Activated B cell treated with CpG ODN at 0.5 μM for 24 hours (primary cell): ENCODE measurements at regions of chr9 and their contacts with region 1.

Region 1: DNA sequence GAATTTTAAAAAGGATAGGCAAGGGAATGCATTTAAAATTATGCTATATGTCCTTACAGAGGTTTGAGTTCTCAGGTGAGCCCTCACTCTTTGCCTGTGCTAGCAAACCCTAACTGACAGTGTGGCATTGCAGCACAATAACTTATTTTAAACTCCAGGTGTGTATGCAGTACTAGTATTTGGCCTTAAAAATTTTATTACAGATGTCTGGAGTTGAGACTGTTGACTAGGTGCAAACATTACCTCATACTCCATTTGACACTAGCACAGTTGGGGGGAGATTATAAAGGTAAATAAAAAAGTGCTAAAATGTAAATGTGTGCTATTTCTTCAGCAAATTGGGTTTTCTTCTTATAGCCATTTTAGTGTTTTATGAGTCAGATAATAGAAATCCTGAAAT is 407.7 kb downstream of the SH3GL2 start:
- DNase-seq: no peak
- ATAC-seq: no peak
- H3K4me3 Mint-ChIP-seq: no peak overlapping the region
- H3K27ac Mint-ChIP-seq: no peak overlapping the region
- H3K4me1 Mint-ChIP-seq: no peaks in the 10 kb centered on the region
- H3K27me3 Mint-ChIP-seq: no peaks in the 10 kb centered on the region
- CTCF ChIP-seq: no peak

Region 2: GRCh38 chr9:17776735-17777134 is 209.9 kb before region 1 on chr9:
- CTCF ChIA-PET with region 1: no interaction called
- POLR2A ChIA-PET with region 1: no interaction called
- intact Hi-C with region 1: no loop called
- DNase-seq: no peak
- ATAC-seq: no peak
- H3K4me3 Mint-ChIP-seq: no peak overlapping the region
- H3K27ac Mint-ChIP-seq: no peak overlapping the region
- H3K4me1 Mint-ChIP-seq: no peaks in the 10 kb centered on the region
- H3K27me3 Mint-ChIP-seq: no peaks in the 10 kb centered on the region
- CTCF ChIP-seq: no peak

Region 3: DNA sequence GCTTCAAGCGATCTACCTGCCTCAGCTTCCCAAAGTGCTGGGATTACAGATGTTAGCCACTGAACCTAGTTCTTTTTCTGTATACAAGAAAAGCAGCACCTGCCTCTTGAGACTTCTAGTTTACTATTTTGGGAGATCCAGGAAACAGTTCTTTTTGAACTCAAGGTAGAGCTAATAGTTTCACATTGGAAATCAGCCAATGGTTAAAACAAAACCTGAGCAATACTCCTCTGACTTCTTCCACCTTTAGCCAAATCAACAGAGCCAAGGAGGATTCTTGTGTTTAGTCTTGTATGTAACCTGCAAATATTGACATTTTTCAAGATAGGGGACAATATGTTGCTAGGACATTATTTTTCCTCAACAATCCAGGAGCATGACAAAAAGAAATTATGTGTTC is 58.4 kb before region 1 on chr9:
- CTCF ChIA-PET with region 1: no interaction called
- POLR2A ChIA-PET with region 1: no interaction called
- intact Hi-C with region 1: loop called (anchors 10 kb)
- DNase-seq: no peak
- ATAC-seq: no peak
- H3K4me3 Mint-ChIP-seq: no peak overlapping the region
- H3K27ac Mint-ChIP-seq: no peak overlapping the region
- H3K4me1 Mint-ChIP-seq: no peaks in the 10 kb centered on the region
- H3K27me3 Mint-ChIP-seq: no peaks in the 10 kb centered on the region
- CTCF ChIP-seq: no peak